ENCODE measurements at regions of chr11 and their contacts with region 1.

Region 1: DNA sequence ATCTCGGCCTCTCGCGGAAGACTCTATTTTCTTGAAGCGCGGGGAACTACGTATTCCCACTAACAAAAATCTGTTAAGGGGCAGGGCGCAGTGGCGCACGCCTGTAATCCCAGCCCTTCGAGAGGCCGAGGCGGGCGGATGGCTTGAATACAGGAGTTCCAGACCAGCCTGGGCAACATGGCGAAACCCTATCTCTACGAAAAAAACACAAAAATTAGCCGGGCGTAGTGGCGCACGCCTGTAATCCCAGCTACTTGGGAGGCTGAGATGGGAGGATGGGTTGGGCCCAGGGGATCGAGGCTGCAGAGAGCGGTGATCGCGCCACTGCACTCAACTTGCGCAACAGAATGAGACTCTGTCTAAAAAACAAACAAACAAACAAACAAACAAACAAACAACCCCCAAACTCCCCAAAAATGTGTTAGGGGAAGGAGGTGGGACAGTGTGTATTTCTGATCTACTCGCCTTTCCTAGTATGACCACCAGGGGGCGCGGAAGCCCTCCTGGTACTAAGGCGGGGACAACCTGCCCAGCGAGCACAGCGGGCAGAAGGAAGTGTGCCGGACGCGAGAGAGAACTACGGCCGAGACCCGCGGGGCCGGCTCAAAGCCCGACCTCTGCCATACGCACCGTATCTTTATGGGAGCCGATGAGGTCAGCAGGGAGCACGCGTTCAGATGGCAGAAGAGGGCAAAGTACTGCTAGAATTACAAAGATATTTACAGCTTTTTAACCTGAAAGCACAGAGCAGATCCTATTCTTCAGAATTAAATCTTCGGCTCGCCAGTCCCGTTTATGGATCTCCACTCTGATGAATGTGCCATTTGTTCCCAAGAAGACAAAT is 1.3 kb upstream of the STX3 start:
- DNase-seq: peak; percentile 67 to 89 (median 78)
- ATAC-seq: peak; percentile 63
- H3K4me3 ChIP-seq: peak overlapping the region; percentile 89
- H3K4me3 Mint-ChIP-seq: peak overlapping the region; percentile 93
- H3K27ac ChIP-seq: no peak overlapping the region
- H3K27ac Mint-ChIP-seq: peak overlapping the region; percentile 40
- H3K4me1 ChIP-seq: peaks cover 28% of the 10 kb centered on the region
- H3K4me1 Mint-ChIP-seq: peaks cover 26% of the 10 kb centered on the region
- H3K27me3 ChIP-seq: peaks cover 6 to 16% of the 10 kb centered on the region in 2 experiments
- H3K27me3 Mint-ChIP-seq: peaks cover 18% of the 10 kb centered on the region
- CTCF ChIP-seq: peak; percentile 96

Region 2: GRCh38 chr11:59545179-59546020 is 208.5 kb before region 1 on chr11:
- CTCF ChIA-PET with region 1: no interaction called
- POLR2A ChIA-PET with region 1: no interaction called
- intact Hi-C with region 1: loop called in 1 of 2 experiments (anchors 5 kb)
- DNase-seq: peak in 1 of 14 experiments; percentile 43
- ATAC-seq: no peak
- H3K4me3 ChIP-seq: no peak overlapping the region
- H3K4me3 Mint-ChIP-seq: no peak overlapping the region
- H3K27ac ChIP-seq: no peak overlapping the region
- H3K27ac Mint-ChIP-seq: no peak overlapping the region
- H3K4me1 ChIP-seq: peaks cover 4% of the 10 kb centered on the region
- H3K4me1 Mint-ChIP-seq: peaks cover 9% of the 10 kb centered on the region
- H3K27me3 ChIP-seq: no peaks in the 10 kb centered on the region
- H3K27me3 Mint-ChIP-seq: peaks cover 2% of the 10 kb centered on the region
- CTCF ChIP-seq: no peak

Region 3: DNA sequence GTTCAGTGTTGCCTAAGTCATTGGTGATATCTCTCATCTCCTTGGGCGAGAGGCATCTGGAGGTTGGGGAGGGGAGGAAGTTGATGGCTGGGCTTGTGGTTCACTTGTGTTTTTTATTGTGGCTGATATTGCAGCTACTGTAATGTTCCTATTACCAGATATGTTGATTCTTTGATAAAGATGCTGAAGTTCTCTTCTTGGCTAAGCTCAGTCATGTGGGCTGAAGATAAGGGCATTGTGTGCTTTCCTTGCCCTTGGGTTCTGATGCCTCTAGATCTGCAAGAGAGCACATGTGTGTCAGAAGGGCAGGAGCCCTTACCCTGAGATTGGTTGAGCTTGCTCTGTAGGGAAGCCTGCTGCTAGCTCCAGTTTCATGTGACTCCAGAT is 13.3 kb after region 1 on chr11:
- CTCF ChIA-PET with region 1: interaction called, 5 read pairs
- POLR2A ChIA-PET with region 1: interaction called, 21 read pairs
- intact Hi-C with region 1: no loop called
- DNase-seq: peak in 4 of 14 experiments; percentile 22 to 70 (median 53)
- ATAC-seq: peak; percentile 80
- H3K4me3 ChIP-seq: no peak overlapping the region
- H3K4me3 Mint-ChIP-seq: peak overlapping the region; percentile 57
- H3K27ac ChIP-seq: no peak overlapping the region
- H3K27ac Mint-ChIP-seq: peak overlapping the region; percentile 21
- H3K4me1 ChIP-seq: peaks cover 56% of the 10 kb centered on the region
- H3K4me1 Mint-ChIP-seq: peaks cover 25% of the 10 kb centered on the region
- H3K27me3 ChIP-seq: no peaks in the 10 kb centered on the region
- H3K27me3 Mint-ChIP-seq: no peaks in the 10 kb centered on the region
- CTCF ChIP-seq: no peak

Region 4: DNA sequence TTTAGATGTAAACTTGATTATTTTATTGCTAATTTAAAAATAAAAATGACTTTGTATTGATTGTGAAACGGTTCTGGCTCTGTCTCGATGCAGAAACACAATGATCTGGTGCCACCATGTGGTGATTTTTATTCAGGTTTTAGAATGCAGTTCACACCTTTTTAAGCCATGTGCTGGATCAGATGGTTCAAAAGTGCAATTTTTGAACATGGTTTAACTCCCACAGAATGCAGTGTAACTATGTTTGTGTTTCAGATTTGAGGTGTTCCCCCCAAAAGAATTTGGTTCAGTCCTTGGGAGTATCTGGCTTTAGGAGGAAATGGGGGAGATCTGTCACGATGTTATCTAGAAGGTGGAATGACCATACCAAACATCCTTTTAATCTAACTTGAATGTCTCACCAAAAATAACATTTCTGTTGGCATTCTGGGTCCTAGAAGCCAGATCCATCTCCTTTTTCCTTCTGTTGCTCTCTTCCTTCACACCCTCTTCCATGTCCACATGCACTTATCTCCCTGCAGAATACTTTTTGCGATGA is 48.8 kb after region 1 on chr11:
- CTCF ChIA-PET with region 1: interaction called, 50 read pairs
- POLR2A ChIA-PET with region 1: interaction called, 20 read pairs
- intact Hi-C with region 1: loop called (anchors 1 kb)
- DNase-seq: peak in 7 of 14 experiments; percentile 21 to 82 (median 57)
- ATAC-seq: peak; percentile 85
- H3K4me3 ChIP-seq: no peak overlapping the region
- H3K4me3 Mint-ChIP-seq: no peak overlapping the region
- H3K27ac ChIP-seq: no peak overlapping the region
- H3K27ac Mint-ChIP-seq: no peak overlapping the region
- H3K4me1 ChIP-seq: no peaks in the 10 kb centered on the region
- H3K4me1 Mint-ChIP-seq: no peaks in the 10 kb centered on the region
- H3K27me3 ChIP-seq: no peaks in the 10 kb centered on the region
- H3K27me3 Mint-ChIP-seq: no peaks in the 10 kb centered on the region
- CTCF ChIP-seq: peak; percentile 73

Region 5: GRCh38 chr11:59810189-59810910 is 56.5 kb after region 1 on chr11 and contains the start of gene MRPL16:
- CTCF ChIA-PET with region 1: interaction called, 37 read pairs
- POLR2A ChIA-PET with region 1: interaction called, 18 read pairs
- intact Hi-C with region 1: loop called in 1 of 2 experiments (anchors 2 kb)
- DNase-seq: peak; percentile 84 to 95 (median 88)
- ATAC-seq: peak; percentile 99
- H3K4me3 ChIP-seq: peak within 1 kb of the TSS; percentile 93
- H3K4me3 Mint-ChIP-seq: peak within 1 kb of the TSS; percentile 95
- H3K27ac ChIP-seq: peak within 1 kb of the TSS; percentile 53 to 65
- H3K27ac Mint-ChIP-seq: peak within 1 kb of the TSS; percentile 93
- H3K4me1 ChIP-seq: peaks cover 25% of the 10 kb centered on the region
- H3K4me1 Mint-ChIP-seq: peaks cover 33% of the 10 kb centered on the region
- H3K27me3 ChIP-seq: no peaks in the 10 kb centered on the region
- H3K27me3 Mint-ChIP-seq: peaks cover 3% of the 10 kb centered on the region
- CTCF ChIP-seq: peak; percentile 12
- total RNA-seq, gene MRPL16: 22.8 to 24.6 TPM

Region 6: DNA sequence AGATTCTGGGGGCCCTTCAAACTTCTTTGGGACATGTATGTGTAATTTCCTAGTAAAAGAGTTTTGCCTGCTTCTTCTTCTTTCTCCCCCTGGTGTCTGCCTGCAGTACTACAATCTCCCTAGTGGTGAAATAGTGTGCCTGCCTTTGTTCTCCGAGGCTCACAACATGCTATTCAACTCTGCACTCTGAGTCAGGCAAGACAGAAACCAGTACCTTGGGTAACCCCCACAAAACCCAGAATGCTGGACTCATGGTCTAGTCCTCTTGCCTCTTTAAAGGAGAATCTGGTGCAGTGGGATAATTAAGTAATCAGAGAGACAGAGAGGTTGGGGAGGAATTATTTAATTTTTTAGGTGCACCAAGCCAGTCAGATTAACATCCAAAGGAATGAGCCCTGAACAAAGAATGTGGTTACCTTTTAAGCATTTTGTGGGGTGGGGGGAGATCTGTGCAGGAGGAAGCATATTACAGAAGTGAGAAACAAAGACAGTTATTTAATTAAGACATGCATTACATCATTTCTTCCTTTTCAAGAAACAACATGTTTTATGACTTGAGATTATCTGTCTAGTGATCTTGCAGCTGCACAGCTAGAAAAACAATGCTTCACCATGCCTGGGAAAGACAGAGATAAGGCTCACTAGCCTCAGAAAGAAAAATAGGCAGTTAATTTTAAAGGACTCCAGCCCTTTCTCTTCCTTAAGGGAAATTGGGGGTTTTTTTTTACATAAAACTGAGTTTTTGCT is 440.0 kb after region 1 on chr11:
- CTCF ChIA-PET with region 1: no interaction called
- POLR2A ChIA-PET with region 1: no interaction called
- intact Hi-C with region 1: loop called in 1 of 2 experiments (anchors 5 kb)
- DNase-seq: peak; percentile 3 to 70 (median 42)
- ATAC-seq: peak; percentile 93
- H3K4me3 ChIP-seq: no peak overlapping the region
- H3K4me3 Mint-ChIP-seq: peak overlapping the region; percentile 3
- H3K27ac ChIP-seq: no peak overlapping the region
- H3K27ac Mint-ChIP-seq: peak overlapping the region; percentile 80
- H3K4me1 ChIP-seq: no peaks in the 10 kb centered on the region
- H3K4me1 Mint-ChIP-seq: peaks cover 26% of the 10 kb centered on the region
- H3K27me3 ChIP-seq: no peaks in the 10 kb centered on the region
- H3K27me3 Mint-ChIP-seq: peaks cover 10% of the 10 kb centered on the region
- CTCF ChIP-seq: peak; percentile 82

Measured in CD4-positive, alpha-beta T cell (primary cell).